Activated CD4-positive, alpha-beta T cell treated with anti-CD3 and anti-CD28 coated beads for 36 hours (primary cell): ENCODE measurements at regions of chr13 and their contacts with region 1.

Region 1: GRCh38 chr13:51625555-51626345 is 41.5 kb downstream of the WDFY2 start:
- DNase-seq: no peak
- ATAC-seq: no peak
- H3K4me3 Mint-ChIP-seq: no peak overlapping the region
- H3K27ac Mint-ChIP-seq: no peak overlapping the region
- H3K4me1 Mint-ChIP-seq: peaks cover 37% of the 10 kb centered on the region
- H3K27me3 Mint-ChIP-seq: no peaks in the 10 kb centered on the region

Region 2: DNA sequence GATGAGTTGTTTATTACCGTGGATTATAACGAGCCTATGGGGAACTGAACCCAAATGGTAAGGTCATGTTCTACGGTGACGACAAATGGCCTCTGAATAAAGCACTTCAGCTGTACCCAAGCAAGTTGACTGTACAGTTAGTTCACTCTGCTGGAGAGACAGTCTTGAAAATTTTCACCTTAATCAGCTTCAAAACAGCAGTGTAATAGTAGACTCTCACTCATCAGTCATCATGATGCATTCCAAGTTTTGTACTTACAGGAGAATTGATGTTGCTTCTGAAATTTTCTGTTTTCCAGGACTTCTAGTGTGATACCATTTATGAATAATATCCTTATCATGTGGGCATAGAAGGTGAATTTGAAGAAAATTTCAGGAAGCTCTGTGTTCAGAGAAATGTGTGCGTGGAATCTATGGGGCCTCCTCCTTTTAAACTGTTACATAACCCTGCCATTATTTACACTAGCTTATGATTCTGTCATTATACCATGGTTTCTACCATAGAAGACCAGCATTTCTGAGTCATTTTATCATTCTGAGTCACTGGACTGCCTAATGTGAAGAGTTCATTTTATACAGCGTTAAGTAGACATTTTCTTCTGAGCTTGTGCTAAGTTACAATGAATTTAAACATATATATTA is 55.4 kb after region 1 on chr13:
- CTCF ChIA-PET with region 1: interaction called, 6 read pairs
- POLR2A ChIA-PET with region 1: no interaction called
- intact Hi-C with region 1: loop called in 1 of 2 experiments (anchors 2 kb)
- DNase-seq: no peak
- ATAC-seq: peak; percentile 92
- H3K4me3 Mint-ChIP-seq: no peak overlapping the region
- H3K27ac Mint-ChIP-seq: no peak overlapping the region
- H3K4me1 Mint-ChIP-seq: peaks cover 12% of the 10 kb centered on the region
- H3K27me3 Mint-ChIP-seq: no peaks in the 10 kb centered on the region